Panc1 (cell line): ENCODE measurements at regions of chr18 and their contacts with region 1.

Region 1: GRCh38 chr18:33161131-33161530 is 279.4 kb downstream of the CCDC178 start:
- DNase-seq: no peak
- ATAC-seq: no peak
- H3K4me3 ChIP-seq: no peak overlapping the region
- H3K27ac ChIP-seq: no peak overlapping the region
- H3K4me1 ChIP-seq: no peaks in the 10 kb centered on the region
- H3K27me3 ChIP-seq: no peaks in the 10 kb centered on the region
- CTCF ChIP-seq: no peak

Region 2: DNA sequence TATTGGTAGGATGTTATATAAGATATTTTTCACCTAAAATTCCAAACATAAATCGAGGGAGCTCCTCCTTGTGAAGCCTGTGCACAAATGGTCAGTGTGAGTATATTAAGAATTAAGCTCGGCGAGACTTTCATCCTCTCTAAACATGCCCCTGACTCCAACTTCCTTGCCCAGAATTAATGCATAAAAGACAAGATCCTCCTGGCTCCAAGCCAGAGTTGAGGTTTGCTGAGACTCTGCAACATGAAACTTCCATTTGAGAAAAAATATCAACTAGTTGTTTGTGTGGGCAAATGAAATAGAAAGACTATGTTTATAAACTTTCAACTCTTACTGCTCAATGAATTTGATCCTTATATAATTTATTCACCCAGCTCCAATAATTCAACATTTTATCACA is 211.3 kb after region 1 on chr18:
- CTCF ChIA-PET with region 1: no interaction called
- POLR2A ChIA-PET with region 1: no interaction called
- in situ Hi-C with region 1: no loop called
- intact Hi-C with region 1: loop called (anchors 2 kb)
- DNase-seq: no peak
- ATAC-seq: no peak
- H3K4me3 ChIP-seq: no peak overlapping the region
- H3K27ac ChIP-seq: no peak overlapping the region
- H3K4me1 ChIP-seq: no peaks in the 10 kb centered on the region
- H3K27me3 ChIP-seq: no peaks in the 10 kb centered on the region
- CTCF ChIP-seq: no peak